GM10248 (cell line): ENCODE measurements at regions of chr1 and their contacts with region 1.

Region 1: GRCh38 chr1:116168277-116169097 is 57.3 kb downstream of the MAB21L3 start:
- DNase-seq: peak; percentile 89
- CTCF ChIP-seq: peak; percentile 96

Region 2: DNA sequence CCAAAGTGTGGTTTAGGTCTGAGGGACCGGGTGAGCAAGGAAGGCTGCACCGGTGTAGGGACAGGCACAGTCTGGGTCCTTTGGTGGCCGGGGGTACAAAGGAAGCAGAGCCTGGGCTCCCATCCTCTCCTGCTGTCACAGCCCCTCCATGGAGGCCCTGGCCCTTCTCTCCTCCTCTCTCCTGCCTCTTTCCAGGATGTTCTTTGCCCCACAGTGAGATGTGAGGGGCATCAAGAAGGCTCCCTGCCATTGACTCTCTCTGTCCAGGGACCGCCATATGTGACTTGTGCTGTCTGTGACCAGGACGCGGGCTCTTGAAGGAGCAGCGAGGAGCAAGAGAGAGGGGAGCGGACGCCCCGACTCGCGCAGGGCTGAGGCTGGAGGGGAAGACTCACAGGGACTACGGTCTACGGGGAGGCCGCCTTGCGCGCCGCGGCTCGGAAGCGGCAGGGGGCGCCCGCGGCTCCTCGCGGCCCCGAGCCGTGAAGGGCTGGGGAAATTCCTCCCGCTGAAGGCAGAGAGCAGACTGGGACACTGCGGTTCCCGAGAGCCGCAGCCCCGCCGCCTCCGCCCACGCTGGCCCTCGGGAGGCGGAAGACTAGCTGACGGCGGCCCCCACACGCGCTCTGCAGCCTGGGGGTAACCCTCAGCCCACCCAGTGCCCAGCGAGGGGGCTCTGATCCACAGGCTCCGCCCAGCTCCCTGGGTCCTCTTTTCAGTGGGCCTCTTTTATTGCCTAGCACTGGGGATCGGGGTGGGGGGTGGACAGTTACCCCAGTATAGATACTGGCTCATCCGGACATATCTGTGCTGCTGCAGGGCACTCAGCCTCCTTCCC is 16.5 kb before region 1 on chr1:
- CTCF ChIA-PET with region 1: interaction called, 27 read pairs
- POLR2A ChIA-PET with region 1: no interaction called
- DNase-seq: peak; percentile 93
- CTCF ChIP-seq: peak; percentile 97

Region 3: GRCh38 chr1:116179419-116179818 is 10.9 kb after region 1 on chr1:
- CTCF ChIA-PET with region 1: interaction called, 12 read pairs
- POLR2A ChIA-PET with region 1: no interaction called
- DNase-seq: no peak
- CTCF ChIP-seq: no peak

Region 4: GRCh38 chr1:116230712-116231111 is 62.2 kb after region 1 on chr1:
- CTCF ChIA-PET with region 1: no interaction called
- POLR2A ChIA-PET with region 1: no interaction called
- DNase-seq: no peak
- CTCF ChIP-seq: no peak

Region 5: GRCh38 chr1:116418091-116418830 is 249.8 kb after region 1 on chr1:
- CTCF ChIA-PET with region 1: no interaction called
- POLR2A ChIA-PET with region 1: no interaction called
- DNase-seq: peak; percentile 88
- CTCF ChIP-seq: no peak